ENCODE measurements at regions of chr10 and their contacts with region 1.

Region 1: GRCh38 chr10:52313933-52314816 is at the start of gene DKK1:
- DNase-seq: peak; percentile 95
- H3K4me3 Mint-ChIP-seq: peak within 1 kb of the TSS; percentile 87
- H3K27ac Mint-ChIP-seq: peak within 1 kb of the TSS; percentile 87
- H3K4me1 Mint-ChIP-seq: peaks cover 35% of the 10 kb centered on the region
- H3K27me3 Mint-ChIP-seq: no peaks in the 10 kb centered on the region
- CTCF ChIP-seq: peak; percentile 95
- total RNA-seq, gene DKK1: 122 and 145 TPM in 2 replicates

Region 2: DNA sequence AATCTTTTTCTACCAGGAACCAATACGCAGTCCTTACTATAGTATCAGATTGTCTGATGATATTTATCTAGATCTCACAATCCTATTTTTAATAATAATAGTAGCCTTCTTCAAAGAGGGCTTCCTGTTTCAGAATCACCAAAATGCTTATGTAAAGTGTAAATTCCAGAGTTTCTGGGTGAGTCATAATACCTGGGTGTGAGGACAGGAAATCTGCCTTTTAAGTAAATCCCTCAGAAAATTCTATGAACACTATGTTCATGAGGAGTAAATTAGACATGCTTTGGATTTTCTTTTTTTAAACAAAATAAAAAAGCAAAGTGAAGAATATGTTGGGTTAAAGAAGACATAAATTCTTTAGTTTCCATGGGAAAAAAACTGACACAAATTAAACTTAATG is 20.4 kb after region 1 on chr10:
- CTCF ChIA-PET with region 1: interaction called, 5 read pairs
- intact Hi-C with region 1: loop called (anchors 1 kb)
- DNase-seq: no peak
- H3K4me3 Mint-ChIP-seq: no peak overlapping the region
- H3K27ac Mint-ChIP-seq: peak overlapping the region; percentile 82
- H3K4me1 Mint-ChIP-seq: peaks cover 41% of the 10 kb centered on the region
- H3K27me3 Mint-ChIP-seq: no peaks in the 10 kb centered on the region
- CTCF ChIP-seq: no peak

Region 3: DNA sequence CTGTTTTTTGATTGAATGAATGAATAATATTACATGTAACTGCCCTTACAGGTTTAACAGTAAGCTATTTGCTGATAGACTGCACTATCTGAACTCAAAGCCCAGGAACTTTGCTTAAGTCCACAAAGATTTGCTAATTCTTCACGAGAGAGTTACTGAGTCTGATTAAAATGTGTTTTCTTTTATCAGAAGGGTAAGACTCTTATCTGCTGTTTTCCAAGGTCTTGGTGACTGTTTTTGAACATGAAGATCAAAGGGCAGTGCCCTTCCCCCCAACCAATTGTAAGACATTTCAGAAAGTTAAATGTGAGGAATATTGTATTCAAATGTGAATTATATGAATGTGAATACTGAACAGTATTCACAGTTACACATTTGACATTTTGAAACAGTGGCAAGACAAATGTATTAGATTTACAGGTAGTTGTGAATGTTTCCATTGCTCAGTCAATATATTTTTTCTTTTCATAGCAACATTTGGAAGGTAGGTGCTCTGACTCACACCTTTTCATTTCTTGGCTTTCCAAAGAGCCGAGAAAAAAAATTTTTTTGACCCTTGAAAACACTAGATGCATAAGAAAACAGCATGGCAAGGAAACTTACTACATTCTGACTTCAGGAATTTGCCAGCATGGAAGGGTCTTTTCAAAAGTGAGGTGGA is 62.6 kb after region 1 on chr10:
- CTCF ChIA-PET with region 1: no interaction called
- intact Hi-C with region 1: no loop called
- DNase-seq: no peak
- H3K4me3 Mint-ChIP-seq: no peak overlapping the region
- H3K27ac Mint-ChIP-seq: peak overlapping the region; percentile 2
- H3K4me1 Mint-ChIP-seq: peaks cover 59% of the 10 kb centered on the region
- H3K27me3 Mint-ChIP-seq: no peaks in the 10 kb centered on the region
- CTCF ChIP-seq: no peak

Region 4: DNA sequence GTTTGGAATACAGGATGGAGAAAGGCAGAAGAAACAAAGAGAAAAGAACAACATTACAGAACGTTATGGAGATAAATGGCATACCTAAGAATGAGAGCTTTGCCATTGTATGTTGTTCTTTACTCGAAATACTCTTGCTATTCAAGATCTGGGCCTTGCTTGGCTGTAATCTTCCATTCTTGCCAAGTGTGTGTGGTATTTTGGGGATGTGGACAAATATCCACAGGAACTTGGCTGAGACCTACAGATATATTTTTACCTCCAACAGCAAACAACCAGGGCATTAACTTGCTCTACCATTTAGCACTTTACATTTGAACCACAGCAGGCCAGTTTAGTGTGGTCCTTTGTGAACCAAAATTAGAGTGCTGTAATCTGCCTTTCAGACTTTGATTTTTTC is 76.2 kb after region 1 on chr10:
- CTCF ChIA-PET with region 1: interaction called, 5 read pairs
- intact Hi-C with region 1: loop called (anchors 2 kb)
- DNase-seq: no peak
- H3K4me3 Mint-ChIP-seq: no peak overlapping the region
- H3K27ac Mint-ChIP-seq: no peak overlapping the region
- H3K4me1 Mint-ChIP-seq: peaks cover 45% of the 10 kb centered on the region
- H3K27me3 Mint-ChIP-seq: no peaks in the 10 kb centered on the region
- CTCF ChIP-seq: no peak

Region 5: DNA sequence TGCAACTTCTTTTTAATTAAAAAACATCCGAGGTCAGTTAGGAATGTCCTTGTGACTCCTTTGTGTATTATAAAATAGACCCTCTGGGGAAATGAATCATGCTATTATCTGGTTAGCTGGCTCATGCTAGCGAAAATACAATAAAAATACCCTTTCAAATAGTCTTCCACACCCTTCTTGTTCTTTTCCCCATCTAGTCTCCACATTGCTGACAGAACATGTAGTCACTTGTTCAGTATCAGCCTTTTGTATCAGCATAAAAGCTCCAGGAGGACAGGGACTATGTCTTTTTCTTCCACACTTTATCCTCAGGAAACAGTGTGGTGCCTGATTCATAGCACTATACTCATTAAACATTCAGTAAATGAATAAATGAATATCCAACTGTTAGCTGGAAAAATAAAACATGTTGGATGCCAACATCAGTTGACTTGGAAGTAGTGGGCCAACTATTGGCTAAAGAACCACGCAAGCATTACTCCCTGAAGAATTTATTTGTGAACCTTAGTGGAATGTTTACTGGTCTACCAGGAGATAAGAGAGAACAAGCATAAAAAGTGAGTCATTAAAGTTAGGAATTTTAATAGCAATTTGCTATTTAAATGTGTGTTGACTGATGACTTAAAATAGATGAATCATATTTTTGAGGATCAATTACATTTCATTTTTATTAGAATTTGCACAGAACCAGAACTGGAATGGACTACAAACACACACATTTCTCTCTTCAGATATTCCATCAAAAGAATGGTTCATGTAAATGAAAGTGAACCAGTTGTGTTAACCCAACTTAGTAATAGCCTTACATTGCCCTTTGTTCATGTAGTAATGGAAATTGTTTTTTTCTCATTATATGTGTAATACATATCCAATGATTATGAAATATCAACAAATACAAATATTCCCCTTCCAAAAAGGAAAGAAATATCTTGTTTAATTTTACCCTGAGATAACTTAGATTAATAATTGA is 129.5 kb after region 1 on chr10:
- CTCF ChIA-PET with region 1: no interaction called
- intact Hi-C with region 1: loop called (anchors 1 kb)
- DNase-seq: no peak
- H3K4me3 Mint-ChIP-seq: no peak overlapping the region
- H3K27ac Mint-ChIP-seq: peak overlapping the region; percentile 81
- H3K4me1 Mint-ChIP-seq: peaks cover 12% of the 10 kb centered on the region
- H3K27me3 Mint-ChIP-seq: no peaks in the 10 kb centered on the region
- CTCF ChIP-seq: no peak

Region 6: DNA sequence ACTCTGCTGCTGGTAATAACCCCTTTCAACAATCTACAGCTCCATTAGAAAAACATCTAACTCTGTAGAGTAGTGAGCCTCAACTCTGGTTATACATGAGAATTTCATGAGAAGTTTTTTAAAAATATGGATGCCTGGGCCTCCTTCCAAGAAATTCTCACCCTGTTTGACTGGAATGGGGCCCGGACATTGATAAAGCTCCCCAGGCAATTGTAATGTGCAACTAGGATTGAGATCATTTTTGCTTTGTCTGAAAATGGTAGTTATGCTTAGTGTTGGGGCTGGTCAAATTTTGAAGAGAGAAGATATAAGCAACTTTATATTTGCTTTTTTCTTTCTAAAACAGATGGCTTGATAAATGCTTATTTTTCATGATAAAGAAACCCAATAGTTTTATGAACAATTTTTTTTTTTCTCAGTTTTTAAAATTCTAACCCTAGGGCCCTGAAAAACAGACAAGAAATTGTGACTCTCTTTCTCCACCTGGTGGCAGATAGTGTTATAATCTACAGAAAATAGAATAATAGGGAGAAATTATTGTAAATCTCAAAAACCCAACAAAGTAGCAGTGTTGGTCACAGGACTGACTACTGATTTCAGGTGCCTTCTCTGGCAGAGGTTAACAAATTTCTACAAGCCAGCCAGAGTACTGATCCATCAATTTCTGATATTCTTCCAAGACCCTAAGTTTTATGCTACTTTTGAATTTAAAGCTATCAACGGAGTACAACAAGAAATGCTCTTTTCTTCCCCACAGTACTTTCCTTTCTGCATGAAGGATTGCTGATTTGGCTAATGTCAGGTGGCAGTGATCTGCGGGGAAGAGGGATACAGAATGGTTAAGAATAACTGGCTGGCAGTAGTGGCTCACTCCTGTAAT is 174.7 kb after region 1 on chr10:
- CTCF ChIA-PET with region 1: interaction called, 70 read pairs
- intact Hi-C with region 1: loop called (anchors 1 kb)
- DNase-seq: peak; percentile 24
- H3K4me3 Mint-ChIP-seq: no peak overlapping the region
- H3K27ac Mint-ChIP-seq: peak overlapping the region; percentile 85
- H3K4me1 Mint-ChIP-seq: peaks cover 49% of the 10 kb centered on the region
- H3K27me3 Mint-ChIP-seq: no peaks in the 10 kb centered on the region
- CTCF ChIP-seq: peak; percentile 48

Region 7: DNA sequence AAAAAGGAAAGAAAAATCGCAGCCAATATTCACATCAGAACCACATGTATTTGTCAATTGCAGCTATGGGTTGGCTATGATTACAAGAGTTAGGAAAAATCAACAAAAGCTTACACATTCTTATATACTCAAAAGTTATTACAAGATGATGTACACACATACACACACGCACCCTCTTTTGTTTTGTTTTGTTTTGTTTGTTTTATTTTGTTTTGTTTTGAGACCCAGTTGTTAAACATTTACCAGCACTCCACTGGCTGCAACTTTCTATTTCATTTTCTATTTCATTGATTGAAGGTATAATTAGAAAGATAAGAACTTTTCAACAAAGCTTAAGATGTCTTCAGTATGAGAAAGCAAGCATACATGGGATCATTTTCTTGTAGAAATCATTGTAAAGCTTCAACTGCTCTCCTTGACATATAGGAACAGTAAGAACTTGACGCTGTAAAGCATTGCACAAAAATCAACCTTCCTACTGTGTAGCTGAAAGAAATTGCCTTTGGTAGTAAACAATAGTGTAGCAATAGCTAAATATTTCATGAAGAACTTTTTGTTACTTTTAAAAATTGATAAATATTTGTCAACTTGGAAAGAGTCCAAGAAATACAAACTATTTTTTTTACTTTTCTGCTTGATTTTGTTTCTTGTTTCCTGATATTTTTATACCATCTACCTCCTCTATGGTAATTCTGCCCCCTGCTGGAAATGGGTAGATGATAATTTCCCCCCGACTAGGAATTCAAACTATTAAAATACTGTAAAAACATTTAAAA is 252.5 kb after region 1 on chr10:
- CTCF ChIA-PET with region 1: interaction called, 49 read pairs
- intact Hi-C with region 1: no loop called
- DNase-seq: peak; percentile 45
- H3K4me3 Mint-ChIP-seq: no peak overlapping the region
- H3K27ac Mint-ChIP-seq: no peak overlapping the region
- H3K4me1 Mint-ChIP-seq: peaks cover 9% of the 10 kb centered on the region
- H3K27me3 Mint-ChIP-seq: no peaks in the 10 kb centered on the region
- CTCF ChIP-seq: peak; percentile 66